ENCODE measurements at regions of chr6 and their contacts with region 1.

Region 1: GRCh38 chr6:29763491-29764289 is 40.5 kb downstream of the HLA-F start:
- DNase-seq: no peak
- H3K4me3 ChIP-seq: no peak overlapping the region
- H3K4me3 Mint-ChIP-seq: no peak overlapping the region
- H3K27ac ChIP-seq: no peak overlapping the region
- H3K27ac Mint-ChIP-seq: peak overlapping the region in 1 of 7 donors; percentile 47
- H3K4me1 ChIP-seq: no peaks in the 10 kb centered on the region
- H3K4me1 Mint-ChIP-seq: peaks cover 0 to 7% (median 4%) of the 10 kb centered on the region in 4 donors
- H3K27me3 ChIP-seq: no peaks in the 10 kb centered on the region
- H3K27me3 Mint-ChIP-seq: no peaks in the 10 kb centered on the region

Region 2: DNA sequence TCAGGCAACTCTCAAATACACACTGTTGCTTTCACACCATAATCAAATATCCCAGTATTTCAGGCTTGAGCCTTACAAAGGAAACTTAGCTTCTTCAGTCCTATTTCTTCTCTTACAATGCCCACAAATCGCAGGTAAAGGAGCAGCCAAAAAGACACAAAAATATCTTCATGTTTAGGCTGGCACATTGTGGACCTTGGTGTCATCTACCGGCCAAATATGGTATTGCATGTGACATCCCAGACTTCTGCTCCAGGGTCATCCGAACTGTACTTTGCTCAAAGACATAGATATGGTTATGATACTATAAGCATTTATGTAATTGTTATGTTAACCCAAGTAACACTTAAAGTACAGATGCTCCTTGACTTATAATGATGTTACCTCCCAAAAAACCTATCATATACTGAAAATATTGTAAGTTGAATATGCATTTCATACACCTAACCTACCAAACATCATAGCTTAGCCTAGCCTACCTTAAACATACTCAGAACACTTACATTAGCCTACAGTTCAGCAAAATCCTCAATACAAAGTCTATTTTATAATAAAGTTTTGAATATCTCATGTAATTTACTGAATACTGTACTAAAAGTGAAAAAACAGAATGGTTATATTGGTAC is 174.2 kb before region 1 on chr6:
- CTCF ChIA-PET with region 1: no interaction called
- POLR2A ChIA-PET with region 1: no interaction called
- intact Hi-C with region 1: no loop called
- DNase-seq: peak; percentile 48 to 57 (median 51)
- H3K4me3 ChIP-seq: no peak overlapping the region
- H3K4me3 Mint-ChIP-seq: no peak overlapping the region
- H3K27ac ChIP-seq: no peak overlapping the region
- H3K27ac Mint-ChIP-seq: no peak overlapping the region
- H3K4me1 ChIP-seq: no peaks in the 10 kb centered on the region
- H3K4me1 Mint-ChIP-seq: peaks cover 0 to 1% (median 0%) of the 10 kb centered on the region in 4 donors
- H3K27me3 ChIP-seq: peaks cover 15% of the 10 kb centered on the region
- H3K27me3 Mint-ChIP-seq: peaks cover 8 to 34% of the 10 kb centered on the region in 2 donors

Region 3: GRCh38 chr6:29834564-29835436 is 71.1 kb after region 1 on chr6:
- CTCF ChIA-PET with region 1: interaction called, 11 read pairs
- POLR2A ChIA-PET with region 1: no interaction called
- intact Hi-C with region 1: no loop called
- DNase-seq: peak in 4 of 5 donors; percentile 41 to 50 (median 44)
- H3K4me3 ChIP-seq: no peak overlapping the region
- H3K4me3 Mint-ChIP-seq: no peak overlapping the region
- H3K27ac ChIP-seq: no peak overlapping the region
- H3K27ac Mint-ChIP-seq: peak overlapping the region in 1 of 7 donors; percentile 19
- H3K4me1 ChIP-seq: no peaks in the 10 kb centered on the region
- H3K4me1 Mint-ChIP-seq: peaks cover 0 to 5% (median under 1%) of the 10 kb centered on the region in 4 donors
- H3K27me3 ChIP-seq: peaks cover 15% of the 10 kb centered on the region
- H3K27me3 Mint-ChIP-seq: peaks cover 35 to 57% of the 10 kb centered on the region in 2 donors

Region 4: GRCh38 chr6:29892696-29893095 is 129.0 kb after region 1 on chr6:
- CTCF ChIA-PET with region 1: no interaction called
- POLR2A ChIA-PET with region 1: no interaction called
- intact Hi-C with region 1: no loop called
- DNase-seq: no peak
- H3K4me3 ChIP-seq: no peak overlapping the region
- H3K4me3 Mint-ChIP-seq: peak overlapping the region in 2 of 8 donors; percentile 36 to 43
- H3K27ac ChIP-seq: no peak overlapping the region
- H3K27ac Mint-ChIP-seq: peak overlapping the region in 2 of 7 donors; percentile 55 to 80
- H3K4me1 ChIP-seq: peaks cover 4% of the 10 kb centered on the region
- H3K4me1 Mint-ChIP-seq: peaks cover 0 to 42% (median 12%) of the 10 kb centered on the region in 4 donors
- H3K27me3 ChIP-seq: no peaks in the 10 kb centered on the region
- H3K27me3 Mint-ChIP-seq: no peaks in the 10 kb centered on the region

Region 5: DNA sequence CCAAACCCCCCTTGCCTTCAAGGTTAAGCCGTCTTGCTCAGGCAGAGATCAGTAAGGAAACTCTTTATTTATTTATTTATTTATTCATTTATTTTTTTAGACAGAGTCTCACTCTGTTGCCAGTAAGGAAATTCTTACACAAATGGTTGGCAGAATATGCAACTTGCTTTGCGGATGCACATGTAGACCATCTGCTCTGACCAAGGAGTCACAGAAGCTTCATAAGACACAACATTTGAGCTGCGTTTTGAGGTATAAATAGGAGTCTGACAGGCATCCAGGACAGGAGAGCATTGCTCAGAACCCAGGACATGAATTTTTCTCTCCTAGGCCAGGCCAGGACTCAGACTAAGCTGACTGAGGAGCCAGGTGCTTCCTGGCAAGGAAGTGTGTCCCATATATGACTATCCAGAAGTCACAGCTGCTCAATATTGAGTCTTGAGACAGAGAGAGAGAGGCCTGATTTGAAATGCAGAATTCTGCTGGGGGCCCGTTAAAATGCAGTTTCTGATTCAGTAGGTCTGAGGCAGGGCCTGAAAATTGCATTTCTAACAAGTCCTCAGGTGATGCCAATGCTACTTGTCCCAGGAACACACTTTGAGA is 222.6 kb after region 1 on chr6:
- CTCF ChIA-PET with region 1: no interaction called
- POLR2A ChIA-PET with region 1: no interaction called
- intact Hi-C with region 1: loop called (anchors 2 kb)
- DNase-seq: no peak
- H3K4me3 ChIP-seq: no peak overlapping the region
- H3K4me3 Mint-ChIP-seq: no peak overlapping the region
- H3K27ac ChIP-seq: no peak overlapping the region
- H3K27ac Mint-ChIP-seq: no peak overlapping the region
- H3K4me1 ChIP-seq: no peaks in the 10 kb centered on the region
- H3K4me1 Mint-ChIP-seq: no peaks in the 10 kb centered on the region
- H3K27me3 ChIP-seq: no peaks in the 10 kb centered on the region
- H3K27me3 Mint-ChIP-seq: peaks cover 3 to 7% of the 10 kb centered on the region in 2 donors

Measured in CD4-positive, alpha-beta memory T cell (primary cell).